PC-9 (cell line): ENCODE measurements at regions of chr17 and their contacts with region 1.

Region 1: DNA sequence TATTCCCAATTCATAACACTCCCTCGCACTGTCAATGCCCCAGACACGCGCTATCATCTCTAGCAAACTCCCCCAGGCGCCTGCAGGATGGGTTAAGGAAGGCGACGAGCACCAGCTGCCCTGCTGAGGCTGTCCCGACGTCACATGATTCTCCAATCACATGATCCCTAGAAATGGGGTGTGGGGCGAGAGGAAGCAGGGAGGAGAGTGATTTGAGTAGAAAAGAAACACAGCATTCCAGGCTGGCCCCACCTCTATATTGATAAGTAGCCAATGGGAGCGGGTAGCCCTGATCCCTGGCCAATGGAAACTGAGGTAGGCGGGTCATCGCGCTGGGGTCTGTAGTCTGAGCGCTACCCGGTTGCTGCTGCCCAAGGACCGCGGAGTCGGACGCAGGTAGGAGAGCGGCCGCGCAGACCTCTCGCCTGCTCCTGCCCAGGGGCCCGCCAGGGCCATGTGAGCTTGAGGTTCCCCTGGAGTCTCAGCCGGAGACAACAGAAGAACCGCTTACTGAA is at the start of gene GRN:
- DNase-seq: peak; percentile 93 to 95
- H3K4me3 ChIP-seq: peak within 1 kb of the TSS; percentile 95
- H3K27ac ChIP-seq: peak within 1 kb of the TSS; percentile 31; the same call in 1 of the 2 replicates
- H3K4me1 ChIP-seq: peaks cover 20% of the 10 kb centered on the region
- H3K27me3 ChIP-seq: no peaks in the 10 kb centered on the region
- CTCF ChIP-seq: no peak
- total RNA-seq, gene GRN: 226 and 413 TPM in 2 replicates

Region 2: DNA sequence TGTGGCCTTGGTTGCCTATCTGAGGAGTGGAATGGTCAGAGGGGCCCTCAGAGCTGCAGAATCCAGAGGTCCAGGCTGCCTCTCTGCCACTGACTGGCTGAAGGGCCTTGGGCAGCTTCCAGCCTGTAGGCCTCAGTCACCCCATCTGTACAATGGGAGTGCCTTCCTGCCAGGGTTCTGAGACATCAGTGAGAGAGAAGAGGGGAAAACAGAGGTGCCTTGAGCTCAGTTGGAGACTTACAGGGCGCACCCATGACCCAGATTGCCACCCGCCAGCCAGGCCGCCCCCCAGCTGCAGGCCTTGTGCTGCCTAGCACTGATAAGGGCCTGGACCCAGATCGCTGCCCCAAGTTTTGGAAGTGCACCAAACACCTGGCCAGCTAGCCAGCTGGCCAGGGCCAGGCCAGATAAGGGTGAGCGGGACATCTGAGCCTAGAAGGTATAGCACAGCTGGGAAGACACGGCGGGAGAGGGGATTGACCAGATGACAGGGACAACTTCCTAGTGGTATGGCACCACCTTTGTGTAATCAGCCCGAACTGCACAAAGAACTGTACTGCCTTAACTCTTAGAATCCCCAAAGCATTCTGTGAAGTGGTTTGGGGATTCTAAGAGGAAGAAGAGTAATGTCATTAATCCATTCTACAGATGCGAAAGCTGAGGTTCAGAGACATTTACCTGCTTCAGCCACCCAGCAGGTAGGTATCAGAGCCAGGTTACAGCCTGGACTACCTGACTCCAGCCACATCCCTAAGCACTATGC is 78.4 kb before region 1 on chr17:
- CTCF ChIA-PET with region 1: interaction called, 15 read pairs
- POLR2A ChIA-PET with region 1: no interaction called
- intact Hi-C with region 1: no loop called
- DNase-seq: no peak
- H3K4me3 ChIP-seq: no peak overlapping the region
- H3K27ac ChIP-seq: no peak overlapping the region
- H3K4me1 ChIP-seq: no peaks in the 10 kb centered on the region
- H3K27me3 ChIP-seq: peaks cover 16% of the 10 kb centered on the region
- CTCF ChIP-seq: no peak

Region 3: GRCh38 chr17:44356241-44356640 is 11.2 kb after region 1 on chr17:
- CTCF ChIA-PET with region 1: no interaction called
- POLR2A ChIA-PET with region 1: interaction called, 10 read pairs
- intact Hi-C with region 1: no loop called
- DNase-seq: no peak
- H3K4me3 ChIP-seq: no peak overlapping the region
- H3K27ac ChIP-seq: no peak overlapping the region
- H3K4me1 ChIP-seq: no peaks in the 10 kb centered on the region
- H3K27me3 ChIP-seq: no peaks in the 10 kb centered on the region
- CTCF ChIP-seq: no peak